CD4-positive, alpha-beta memory T cell (primary cell): ENCODE measurements at regions of chr20 and their contacts with region 1.

Region 1: GRCh38 chr20:53828682-53829254 is 235.1 kb upstream of the ZNF217 start:
- DNase-seq: no peak
- H3K4me3 ChIP-seq: peak overlapping the region; percentile 54 to 60
- H3K4me3 Mint-ChIP-seq: peak overlapping the region; percentile 80 to 97 (median 89)
- H3K27ac ChIP-seq: peak overlapping the region; percentile 51
- H3K27ac Mint-ChIP-seq: peak overlapping the region; percentile 71 to 95 (median 93)
- H3K4me1 ChIP-seq: peaks cover 41% of the 10 kb centered on the region
- H3K4me1 Mint-ChIP-seq: peaks cover 24 to 59% (median 43%) of the 10 kb centered on the region in 4 donors
- H3K27me3 ChIP-seq: no peaks in the 10 kb centered on the region
- H3K27me3 Mint-ChIP-seq: no peaks in the 10 kb centered on the region

Region 2: DNA sequence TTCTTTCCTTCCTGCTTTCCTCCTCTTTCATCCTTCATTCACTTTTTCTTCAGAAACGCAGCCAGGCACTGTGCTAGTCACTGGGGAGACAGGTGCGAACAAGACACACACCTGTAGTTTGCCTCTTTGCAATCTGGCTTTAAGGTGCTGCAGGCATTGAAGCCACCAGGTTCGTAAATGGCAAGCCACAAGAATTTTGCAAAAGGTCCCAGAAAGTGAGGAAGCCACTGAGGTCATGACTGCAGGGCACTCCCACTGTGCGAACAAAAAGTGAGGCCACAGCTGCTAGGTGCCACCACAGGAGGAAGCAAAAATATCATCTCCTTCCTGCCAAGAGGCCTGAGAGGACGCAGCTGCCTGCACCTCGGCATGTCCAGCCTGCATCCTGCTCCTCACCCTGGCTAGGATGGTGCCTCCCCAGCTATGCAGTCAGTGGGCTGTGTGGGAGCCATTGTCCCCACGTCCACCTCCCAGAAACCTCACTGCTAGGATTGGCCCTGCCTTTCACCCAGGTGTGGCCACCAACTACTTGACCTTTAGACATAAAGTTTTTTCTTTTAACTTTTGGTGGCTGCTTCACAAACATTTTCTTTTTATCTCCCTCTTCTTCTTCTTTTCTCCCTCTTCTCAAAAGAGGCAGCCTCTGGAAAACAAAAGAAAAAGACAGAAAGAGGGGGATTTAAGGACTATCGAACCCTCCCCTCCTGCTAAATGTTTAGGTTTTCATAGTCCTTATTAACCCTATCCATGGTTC is 10.8 kb after region 1 on chr20:
- CTCF ChIA-PET with region 1: interaction called, 5 read pairs
- POLR2A ChIA-PET with region 1: interaction called, 9 read pairs
- intact Hi-C with region 1: loop called (anchors 2 kb)
- DNase-seq: peak; percentile 70 to 80 (median 77)
- H3K4me3 ChIP-seq: no peak overlapping the region
- H3K4me3 Mint-ChIP-seq: peak overlapping the region; percentile 33 to 98 (median 82)
- H3K27ac ChIP-seq: peak overlapping the region; percentile 44
- H3K27ac Mint-ChIP-seq: peak overlapping the region; percentile 75 to 100 (median 99)
- H3K4me1 ChIP-seq: peaks cover 89% of the 10 kb centered on the region
- H3K4me1 Mint-ChIP-seq: peaks cover 45 to 82% (median 64%) of the 10 kb centered on the region in 4 donors
- H3K27me3 ChIP-seq: no peaks in the 10 kb centered on the region
- H3K27me3 Mint-ChIP-seq: no peaks in the 10 kb centered on the region

Region 3: DNA sequence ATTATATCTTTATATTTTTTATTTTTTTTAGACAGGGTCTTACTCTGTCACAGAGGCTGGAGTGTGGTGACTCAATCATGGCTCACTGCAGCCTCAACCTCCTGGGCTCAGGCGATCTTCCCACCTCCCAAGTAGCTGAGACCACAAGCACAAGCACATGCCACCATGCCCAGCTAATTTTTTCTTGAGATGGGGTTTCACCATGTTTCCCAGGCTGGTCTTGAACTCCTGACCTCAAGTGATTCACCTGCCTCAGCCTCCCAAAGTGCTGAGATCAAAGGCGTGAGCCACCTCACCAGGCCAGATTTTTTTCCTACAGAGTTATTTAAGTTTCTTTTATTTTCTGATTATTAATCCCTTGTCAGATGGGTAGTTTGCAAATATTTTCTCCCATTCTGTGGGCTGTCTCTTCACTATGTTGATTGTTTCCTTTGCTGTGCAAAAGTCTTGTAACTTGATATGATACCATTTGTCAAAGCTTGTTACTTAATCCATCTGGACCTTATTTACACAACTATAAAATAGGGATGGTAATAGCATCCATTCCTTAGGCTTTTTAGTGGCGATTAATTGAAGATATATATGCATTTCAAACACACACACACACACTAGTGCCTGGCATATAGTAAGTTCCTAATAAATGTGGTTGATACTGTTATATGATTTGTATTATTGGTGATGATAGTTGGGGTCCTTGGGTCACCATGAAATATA is 54.5 kb after region 1 on chr20:
- CTCF ChIA-PET with region 1: no interaction called
- POLR2A ChIA-PET with region 1: no interaction called
- intact Hi-C with region 1: no loop called
- DNase-seq: no peak
- H3K4me3 ChIP-seq: no peak overlapping the region
- H3K4me3 Mint-ChIP-seq: no peak overlapping the region
- H3K27ac ChIP-seq: no peak overlapping the region
- H3K27ac Mint-ChIP-seq: peak overlapping the region in 1 of 7 donors; percentile 83
- H3K4me1 ChIP-seq: peaks cover 16% of the 10 kb centered on the region
- H3K4me1 Mint-ChIP-seq: peaks cover 8 to 19% (median 16%) of the 10 kb centered on the region in 4 donors
- H3K27me3 ChIP-seq: no peaks in the 10 kb centered on the region
- H3K27me3 Mint-ChIP-seq: peaks cover 0 to 1% of the 10 kb centered on the region in 2 donors